Cardiac septum (tissue), 1 donor: ENCODE measurements at regions of chr3 and their contacts with region 1.

Region 1: GRCh38 chr3:194682694-194683310 is 2.9 kb upstream of the FAM43A start:
- DNase-seq: peak; percentile 82

Region 2: GRCh38 chr3:194632809-194633348 is 49.9 kb before region 1 on chr3:
- intact Hi-C with region 1: no loop called
- DNase-seq: peak; percentile 76

Region 3: GRCh38 chr3:194661374-194661773 is 21.4 kb before region 1 on chr3:
- intact Hi-C with region 1: no loop called
- DNase-seq: no peak

Region 4: DNA sequence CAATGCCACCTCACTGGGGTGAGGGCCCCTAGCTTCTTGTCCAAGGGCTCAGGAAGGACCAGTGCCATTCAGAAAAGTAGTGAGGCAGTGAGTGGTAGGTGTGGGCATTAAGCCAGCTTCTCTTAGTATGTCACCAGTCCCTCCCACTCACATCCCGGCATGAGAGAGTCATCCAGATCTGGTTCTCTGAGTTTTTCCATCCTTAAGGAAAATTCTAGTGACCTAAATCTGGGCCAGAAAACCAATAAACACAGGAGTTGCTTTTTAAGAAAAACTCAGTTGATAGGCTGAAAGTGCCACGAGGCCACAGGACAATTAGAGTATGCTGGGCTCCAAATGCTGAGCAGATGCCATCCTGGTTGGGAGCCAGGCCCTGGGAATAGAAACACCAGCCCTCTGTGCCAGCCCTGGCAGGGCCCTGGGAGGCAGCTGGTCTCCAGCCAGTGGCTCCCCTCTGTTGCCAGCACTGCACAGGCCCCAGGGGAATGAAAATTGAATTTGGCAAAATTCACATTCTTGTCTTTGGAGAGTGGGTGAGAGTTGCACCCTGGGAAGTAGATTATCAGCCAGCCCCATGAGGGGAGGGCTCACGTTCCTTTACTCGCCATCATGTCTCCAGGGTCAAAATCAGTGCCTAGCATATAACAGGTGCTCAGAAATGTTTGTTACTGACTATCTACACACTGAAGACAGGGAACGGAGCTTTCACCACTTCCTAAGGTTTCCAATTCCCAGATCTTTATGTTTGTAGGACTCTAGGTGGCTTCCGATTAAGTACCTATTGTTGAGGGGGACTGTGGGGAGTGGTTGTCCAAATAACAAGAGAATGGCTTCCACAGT is 55.7 kb after region 1 on chr3:
- intact Hi-C with region 1: loop called (anchors 2 kb)
- DNase-seq: peak; percentile 87

Region 5: DNA sequence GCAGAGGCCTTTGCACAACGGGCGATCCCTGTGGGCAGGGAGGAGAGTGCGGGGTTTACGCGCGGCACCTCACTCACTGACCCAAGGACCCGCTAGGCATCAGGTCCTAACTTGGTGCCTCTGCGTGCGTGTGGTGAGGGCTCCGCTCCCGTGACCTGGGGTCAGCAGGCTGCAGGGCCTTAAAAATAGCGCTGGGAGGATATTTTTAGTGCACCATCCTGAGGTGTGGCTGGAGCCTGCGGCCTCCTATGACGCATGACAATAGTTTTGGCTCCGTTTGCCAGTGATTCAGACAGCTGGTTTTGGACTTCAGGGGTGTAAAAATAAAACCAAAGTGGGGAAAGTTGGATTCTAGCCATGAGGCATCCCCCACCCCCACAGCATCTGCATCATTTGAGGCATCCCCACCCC is 141.9 kb after region 1 on chr3:
- intact Hi-C with region 1: loop called (anchors 2 kb)
- DNase-seq: peak; percentile 90

Region 6: DNA sequence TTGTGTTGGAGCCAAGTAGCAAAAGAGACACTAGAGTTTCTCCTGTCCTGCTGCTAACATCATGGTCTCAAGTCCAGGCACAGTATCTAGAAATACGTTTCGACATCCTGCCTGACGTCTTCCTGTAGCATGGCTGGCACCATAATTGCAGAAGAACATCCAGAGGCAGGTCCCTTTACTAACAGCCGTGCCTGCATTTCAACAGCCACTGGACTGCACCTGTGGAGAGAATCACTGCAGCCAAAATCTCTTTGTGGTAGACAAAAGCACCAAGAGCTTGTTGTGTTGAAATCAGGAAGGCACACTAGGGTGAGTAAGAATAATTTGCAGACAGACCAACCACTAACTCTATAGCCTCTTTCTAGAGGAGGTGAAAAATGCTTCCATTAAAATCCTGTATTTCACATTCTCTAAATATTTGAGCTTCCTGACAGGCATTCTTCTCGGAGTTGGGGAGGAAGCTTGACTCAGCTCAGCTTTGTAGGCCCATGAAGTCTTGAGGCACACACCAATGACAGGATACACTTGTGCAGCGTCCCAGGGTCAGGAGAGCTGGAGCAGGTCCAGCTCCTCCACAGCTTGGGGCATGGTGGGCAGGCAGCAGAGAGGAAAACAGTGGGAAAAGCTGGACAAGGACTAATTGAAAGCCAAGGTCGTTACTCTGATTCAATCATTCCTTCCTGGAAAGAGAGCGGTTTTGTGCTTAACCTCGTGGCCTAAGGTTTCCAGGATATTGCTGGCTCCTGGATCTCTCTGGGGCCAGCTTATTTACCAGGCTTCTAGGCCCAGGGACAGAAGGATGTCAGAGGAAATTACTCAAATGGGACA is 247.8 kb after region 1 on chr3:
- intact Hi-C with region 1: loop called (anchors 2 kb)
- DNase-seq: no peak

Region 7: DNA sequence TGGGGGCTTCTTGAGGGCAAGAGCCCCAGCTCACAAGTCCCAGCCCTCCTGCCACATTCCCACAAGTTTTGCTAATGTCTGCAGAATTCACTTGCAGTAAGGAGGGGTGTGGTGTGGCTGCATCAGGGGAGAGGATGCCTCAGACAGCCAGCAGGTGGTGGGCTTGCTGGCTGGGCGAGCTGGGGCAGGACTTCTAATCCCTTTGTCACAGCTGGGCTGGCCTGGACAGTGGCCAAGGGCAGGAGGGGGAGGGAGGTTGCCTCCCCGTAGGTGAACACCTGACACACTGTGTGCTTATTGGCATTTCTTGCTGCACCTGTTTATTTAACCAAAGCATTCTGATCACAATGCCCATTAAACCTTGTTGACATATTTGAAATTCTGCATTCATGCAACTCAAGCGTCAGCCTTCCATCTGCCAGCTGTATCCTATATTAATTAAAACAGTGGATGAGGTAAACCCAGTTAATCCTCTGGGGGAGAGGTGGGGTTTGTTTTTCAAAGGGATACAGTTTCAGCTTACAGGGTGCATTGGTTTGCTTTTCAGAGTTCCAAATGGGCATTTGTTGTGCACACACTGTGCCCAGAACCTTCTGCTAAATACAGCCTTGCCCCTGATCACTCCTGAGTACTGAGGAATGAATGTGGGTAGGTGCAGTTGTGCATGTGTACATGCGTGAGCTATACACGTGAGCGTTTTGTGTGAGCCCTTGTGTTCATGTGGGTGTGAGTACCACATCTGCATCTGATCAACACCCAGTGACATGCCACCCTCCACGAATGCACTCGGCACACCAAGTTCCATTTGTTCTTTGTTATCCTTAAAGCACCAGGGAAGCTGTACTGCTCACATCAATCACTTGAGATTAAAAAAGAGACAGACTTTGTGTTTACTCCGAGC is 319.4 kb after region 1 on chr3:
- intact Hi-C with region 1: loop called (anchors 5 kb)
- DNase-seq: peak; percentile 81

Region 8: DNA sequence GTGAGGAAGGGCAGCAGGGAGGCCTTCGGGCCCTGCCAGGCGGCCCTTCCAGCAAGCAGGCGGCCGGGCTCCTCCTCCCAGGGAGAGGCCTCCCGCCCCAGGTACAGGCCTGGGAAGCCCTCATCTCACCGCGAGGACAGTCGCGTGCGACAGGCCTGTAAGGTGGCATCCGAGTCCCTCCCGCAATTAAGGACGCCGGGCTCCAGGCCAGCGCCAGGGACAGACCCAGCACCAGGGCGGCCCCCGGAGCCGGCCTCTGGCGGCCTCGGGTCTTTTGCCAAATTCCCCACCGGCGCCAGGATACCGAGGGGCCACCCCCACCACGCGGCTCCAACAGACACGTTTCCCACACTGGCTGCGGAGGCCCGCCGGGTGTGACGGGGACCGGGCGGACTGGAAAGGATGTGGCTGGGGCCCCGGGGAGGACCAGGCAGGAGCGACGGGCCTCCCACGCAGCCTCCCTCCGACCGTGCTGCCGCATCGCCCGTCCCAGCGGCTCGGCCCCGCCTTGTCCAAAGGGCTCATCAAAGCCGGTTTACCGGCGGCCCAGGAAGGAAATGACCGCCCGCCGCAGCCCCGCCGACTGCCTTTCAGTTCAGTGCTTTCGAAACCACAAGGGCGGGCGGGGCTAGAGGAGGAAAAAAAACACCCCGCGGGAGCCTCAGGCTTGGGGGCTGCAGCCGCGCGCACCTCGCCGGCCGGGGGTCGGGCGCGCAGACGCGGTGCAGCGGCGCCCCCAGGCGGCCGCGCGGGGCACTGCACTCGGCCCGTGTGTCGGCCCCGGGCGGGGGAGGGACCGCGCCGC is 576.9 kb after region 1 on chr3:
- intact Hi-C with region 1: loop called (anchors 2 kb)
- DNase-seq: peak; percentile 94